ENCODE measurements at regions of chr14 and their contacts with region 1.

Region 1: GRCh38 chr14:53539489-53540126 is 386.5 kb upstream of the DDHD1 start:
- DNase-seq: peak; percentile 90

Region 2: DNA sequence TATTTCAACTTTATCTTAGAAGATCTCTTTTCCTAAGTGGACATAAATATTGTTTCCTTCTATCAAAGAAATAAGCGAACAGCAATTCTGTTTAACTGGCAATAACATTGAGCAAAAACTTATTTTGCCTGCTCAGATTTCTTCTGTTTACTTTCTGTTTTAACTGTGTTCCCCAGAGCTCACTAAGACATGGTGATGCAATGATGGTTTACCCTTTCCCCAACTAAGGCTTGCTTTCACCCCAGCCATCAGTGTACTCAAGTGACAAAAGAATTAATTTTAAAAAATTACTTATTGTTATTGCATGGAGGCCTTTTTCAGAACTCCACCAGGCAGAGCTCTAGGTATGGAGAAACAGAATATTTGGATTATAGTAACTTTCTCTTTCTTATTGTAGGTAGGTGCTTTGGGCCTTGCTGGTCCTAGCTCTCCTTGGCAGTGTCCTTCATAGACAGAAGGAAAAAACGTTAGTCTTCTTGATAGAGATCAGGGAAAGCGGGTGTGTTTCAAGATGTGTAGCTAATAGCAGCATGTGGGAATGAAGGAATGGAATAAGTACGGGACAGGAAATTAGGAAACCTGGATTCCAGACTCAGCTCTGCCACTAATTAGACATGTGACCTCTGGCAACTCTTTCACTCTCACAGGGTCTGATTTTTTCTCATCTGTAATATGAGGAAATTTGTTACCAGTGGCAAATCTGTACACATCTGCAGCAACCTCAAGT is 371.8 kb before region 1 on chr14:
- intact Hi-C with region 1: no loop called
- DNase-seq: no peak

Region 3: GRCh38 chr14:53767566-53767965 is 228.0 kb after region 1 on chr14:
- intact Hi-C with region 1: no loop called
- DNase-seq: no peak

Region 4: GRCh38 chr14:54175298-54175942 is 635.8 kb after region 1 on chr14:
- intact Hi-C with region 1: loop called in 1 of 2 experiments (anchors 10 kb)
- DNase-seq: no peak

Region 5: DNA sequence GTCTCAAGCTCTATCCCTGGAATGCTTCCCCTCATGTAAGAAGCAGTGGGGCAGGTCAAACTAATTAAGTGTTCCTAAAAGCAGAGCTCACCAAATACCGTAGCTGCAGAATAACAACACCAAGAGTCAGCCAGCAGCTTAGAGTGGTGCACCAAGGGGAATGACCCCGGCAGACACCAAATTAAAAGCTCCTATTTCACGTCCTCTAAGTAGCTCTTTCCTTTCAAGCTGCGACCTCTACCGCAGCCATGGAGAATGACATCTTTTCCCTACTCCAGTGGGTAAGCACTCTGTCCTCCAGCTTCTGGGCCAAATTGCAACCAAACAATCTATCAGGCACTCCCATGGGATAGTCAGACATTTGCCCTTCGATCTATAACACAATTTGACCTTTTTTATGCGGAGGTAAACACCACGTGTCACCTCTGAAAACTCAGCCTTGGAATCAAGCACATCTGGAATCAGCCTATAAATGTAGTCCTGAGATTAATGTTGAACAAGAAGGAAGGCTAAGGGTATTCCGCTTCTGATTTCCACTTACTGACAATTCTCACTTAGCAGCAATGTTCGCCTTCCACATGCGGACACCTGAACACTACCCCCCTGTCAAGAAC is 789.6 kb after region 1 on chr14:
- intact Hi-C with region 1: loop called in 1 of 2 experiments (anchors 5 kb)
- DNase-seq: no peak

Region 6: GRCh38 chr14:54347997-54348611 is 808.5 kb after region 1 on chr14:
- intact Hi-C with region 1: loop called in 1 of 2 experiments (anchors 10 kb)
- DNase-seq: no peak